Calu3 (cell line): ENCODE measurements at regions of chr4 and their contacts with region 1.

Region 1: GRCh38 chr4:3346146-3346545 is 53.3 kb downstream of the RGS12 start:
- DNase-seq: peak; percentile 51
- H3K4me3 Mint-ChIP-seq: no peak overlapping the region
- H3K27ac Mint-ChIP-seq: no peak overlapping the region
- H3K4me1 Mint-ChIP-seq: no peaks in the 10 kb centered on the region
- H3K27me3 Mint-ChIP-seq: no peaks in the 10 kb centered on the region
- CTCF ChIP-seq: peak; percentile 50

Region 2: GRCh38 chr4:3440979-3441500 is 94.9 kb after region 1 on chr4:
- CTCF ChIA-PET with region 1: interaction called, 5 read pairs
- intact Hi-C with region 1: loop called (anchors 2 kb)
- DNase-seq: no peak
- H3K4me3 Mint-ChIP-seq: no peak overlapping the region
- H3K27ac Mint-ChIP-seq: no peak overlapping the region
- H3K4me1 Mint-ChIP-seq: no peaks in the 10 kb centered on the region
- H3K27me3 Mint-ChIP-seq: no peaks in the 10 kb centered on the region
- CTCF ChIP-seq: no peak

Region 3: GRCh38 chr4:3470244-3471097 is 124.3 kb after region 1 on chr4:
- CTCF ChIA-PET with region 1: no interaction called
- intact Hi-C with region 1: no loop called
- DNase-seq: peak; percentile 28
- H3K4me3 Mint-ChIP-seq: peak overlapping the region; percentile 8
- H3K27ac Mint-ChIP-seq: no peak overlapping the region
- H3K4me1 Mint-ChIP-seq: peaks cover 9% of the 10 kb centered on the region
- H3K27me3 Mint-ChIP-seq: no peaks in the 10 kb centered on the region
- CTCF ChIP-seq: no peak

Region 4: DNA sequence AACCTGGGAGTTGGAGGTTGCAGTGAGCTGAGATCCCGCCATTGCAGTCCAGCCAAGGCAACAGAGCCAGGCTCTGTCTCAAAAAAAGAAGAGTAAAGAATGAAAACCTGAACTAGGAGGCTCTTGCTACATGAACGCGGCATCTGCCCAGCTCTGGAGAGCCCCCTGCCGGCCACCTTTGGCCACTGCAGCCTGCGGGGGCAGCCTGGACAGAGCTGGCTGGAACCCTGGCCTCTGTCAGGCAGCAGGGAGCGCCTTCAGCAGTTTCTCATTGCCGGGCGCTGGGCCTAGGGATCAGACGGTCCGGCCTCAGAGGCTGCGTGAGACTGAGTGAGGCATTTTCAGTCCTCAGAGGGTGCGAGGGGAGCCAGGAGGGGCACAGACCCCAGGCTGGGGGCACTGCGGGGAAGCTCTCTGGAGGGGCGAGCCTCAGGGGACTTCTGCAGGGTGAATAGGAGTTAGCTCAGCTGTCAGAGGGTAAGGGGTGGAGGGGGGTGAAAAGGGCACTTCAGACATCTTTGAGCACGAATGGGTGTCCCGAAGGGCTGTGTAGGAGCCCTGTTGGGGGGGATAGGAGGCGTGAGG is 134.5 kb after region 1 on chr4:
- CTCF ChIA-PET with region 1: interaction called, 7 read pairs
- intact Hi-C with region 1: loop called (anchors 1 kb)
- DNase-seq: peak; percentile 86
- H3K4me3 Mint-ChIP-seq: no peak overlapping the region
- H3K27ac Mint-ChIP-seq: no peak overlapping the region
- H3K4me1 Mint-ChIP-seq: no peaks in the 10 kb centered on the region
- H3K27me3 Mint-ChIP-seq: no peaks in the 10 kb centered on the region
- CTCF ChIP-seq: peak; percentile 86

Region 5: GRCh38 chr4:3880615-3881120 is 534.5 kb after region 1 on chr4:
- CTCF ChIA-PET with region 1: interaction called, 10 read pairs
- intact Hi-C with region 1: no loop called
- DNase-seq: peak; percentile 79
- H3K4me3 Mint-ChIP-seq: no peak overlapping the region
- H3K27ac Mint-ChIP-seq: no peak overlapping the region
- H3K4me1 Mint-ChIP-seq: no peaks in the 10 kb centered on the region
- H3K27me3 Mint-ChIP-seq: peaks cover 87% of the 10 kb centered on the region
- CTCF ChIP-seq: peak; percentile 65